Caco-2 (cell line): ENCODE measurements at regions of chr12 and their contacts with region 1.

Region 1: DNA sequence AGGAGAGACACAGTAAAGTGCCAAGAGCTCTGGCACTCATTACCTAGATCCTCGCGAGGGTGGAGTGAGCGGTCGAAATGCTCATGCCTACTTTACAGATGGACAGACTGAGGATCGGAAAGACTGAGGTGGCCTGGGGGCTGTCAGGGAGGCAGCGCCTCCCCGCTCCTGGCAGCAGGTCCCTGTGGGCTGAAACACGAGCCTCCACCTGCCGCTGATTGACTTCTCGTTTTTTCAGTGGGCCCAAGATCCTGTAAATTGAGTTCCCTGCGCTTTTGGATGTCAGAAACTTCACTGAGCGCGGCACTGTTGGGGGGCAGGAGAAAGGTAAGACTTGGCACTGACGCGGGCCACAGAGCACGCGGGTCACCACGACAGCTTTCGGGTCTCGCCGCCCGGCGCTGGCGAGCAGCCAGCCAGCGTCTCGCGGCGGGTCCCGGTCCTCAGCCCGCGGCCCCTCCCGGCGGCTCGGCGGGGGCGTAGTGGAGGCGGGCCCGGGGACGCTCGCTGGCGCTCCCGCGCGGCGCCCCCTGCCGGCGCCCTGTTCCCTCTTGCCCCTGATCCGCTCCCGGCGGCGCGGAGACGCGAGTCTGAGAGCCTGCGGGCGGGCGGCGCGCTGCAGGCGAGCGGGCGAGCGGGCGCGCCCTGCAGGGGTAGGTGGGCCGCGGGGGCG is 550 bp upstream of the SCN8A start:
- DNase-seq: peak; percentile 87 to 97
- H3K4me3 ChIP-seq: peak overlapping the region; percentile 92
- H3K4me3 Mint-ChIP-seq: peak overlapping the region; percentile 90
- H3K27ac Mint-ChIP-seq: peak overlapping the region; percentile 60
- H3K4me1 ChIP-seq: 0 out of 2 replicates have a peak, but pooled peaks cover 7% of the 10 kb centered on the region
- H3K4me1 Mint-ChIP-seq: peaks cover 10% of the 10 kb centered on the region
- H3K27me3 ChIP-seq: no peaks in the 10 kb centered on the region
- H3K27me3 Mint-ChIP-seq: no peaks in the 10 kb centered on the region
- CTCF ChIP-seq: peak; percentile 61 to 63

Region 2: DNA sequence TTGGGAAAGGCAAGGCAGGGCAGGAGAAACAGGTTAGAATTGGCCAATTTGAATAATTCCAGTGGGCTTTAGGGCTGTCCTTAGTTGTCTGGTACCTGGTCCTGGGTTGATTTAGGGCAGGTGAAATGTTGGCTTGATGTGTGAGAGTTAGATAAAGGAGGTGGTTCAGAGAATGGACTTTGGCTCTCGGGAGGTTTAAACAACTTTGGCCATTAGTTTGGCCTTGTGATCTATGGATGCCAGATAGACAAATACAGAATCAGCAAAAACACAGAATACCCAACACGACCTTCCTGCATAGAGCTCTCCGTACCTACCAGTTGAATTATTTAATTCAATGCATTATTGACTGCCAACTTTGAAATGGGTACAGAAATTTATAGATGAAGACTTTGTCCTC is 35.6 kb after region 1 on chr12:
- CTCF ChIA-PET with region 1: interaction called, 4 read pairs
- POLR2A ChIA-PET with region 1: no interaction called
- intact Hi-C with region 1: loop called (anchors 2 kb)
- DNase-seq: peak in 1 of 2 experiments; percentile 6
- H3K4me3 ChIP-seq: no peak overlapping the region
- H3K4me3 Mint-ChIP-seq: no peak overlapping the region
- H3K27ac Mint-ChIP-seq: no peak overlapping the region
- H3K4me1 ChIP-seq: peaks cover 7% of the 10 kb centered on the region
- H3K4me1 Mint-ChIP-seq: peaks cover 26% of the 10 kb centered on the region
- H3K27me3 ChIP-seq: no peaks in the 10 kb centered on the region
- H3K27me3 Mint-ChIP-seq: no peaks in the 10 kb centered on the region
- CTCF ChIP-seq: no peak

Region 3: GRCh38 chr12:51678086-51678724 is 87.7 kb after region 1 on chr12:
- CTCF ChIA-PET with region 1: no interaction called
- POLR2A ChIA-PET with region 1: no interaction called
- intact Hi-C with region 1: loop called (anchors 1 kb)
- DNase-seq: peak; percentile 64 to 77
- H3K4me3 ChIP-seq: no peak overlapping the region
- H3K4me3 Mint-ChIP-seq: no peak overlapping the region
- H3K27ac Mint-ChIP-seq: no peak overlapping the region
- H3K4me1 ChIP-seq: 0 out of 2 replicates have a peak, but pooled peaks cover 4% of the 10 kb centered on the region
- H3K4me1 Mint-ChIP-seq: peaks cover 14% of the 10 kb centered on the region
- H3K27me3 ChIP-seq: no peaks in the 10 kb centered on the region
- H3K27me3 Mint-ChIP-seq: no peaks in the 10 kb centered on the region
- CTCF ChIP-seq: peak; percentile 86 to 94

Region 4: DNA sequence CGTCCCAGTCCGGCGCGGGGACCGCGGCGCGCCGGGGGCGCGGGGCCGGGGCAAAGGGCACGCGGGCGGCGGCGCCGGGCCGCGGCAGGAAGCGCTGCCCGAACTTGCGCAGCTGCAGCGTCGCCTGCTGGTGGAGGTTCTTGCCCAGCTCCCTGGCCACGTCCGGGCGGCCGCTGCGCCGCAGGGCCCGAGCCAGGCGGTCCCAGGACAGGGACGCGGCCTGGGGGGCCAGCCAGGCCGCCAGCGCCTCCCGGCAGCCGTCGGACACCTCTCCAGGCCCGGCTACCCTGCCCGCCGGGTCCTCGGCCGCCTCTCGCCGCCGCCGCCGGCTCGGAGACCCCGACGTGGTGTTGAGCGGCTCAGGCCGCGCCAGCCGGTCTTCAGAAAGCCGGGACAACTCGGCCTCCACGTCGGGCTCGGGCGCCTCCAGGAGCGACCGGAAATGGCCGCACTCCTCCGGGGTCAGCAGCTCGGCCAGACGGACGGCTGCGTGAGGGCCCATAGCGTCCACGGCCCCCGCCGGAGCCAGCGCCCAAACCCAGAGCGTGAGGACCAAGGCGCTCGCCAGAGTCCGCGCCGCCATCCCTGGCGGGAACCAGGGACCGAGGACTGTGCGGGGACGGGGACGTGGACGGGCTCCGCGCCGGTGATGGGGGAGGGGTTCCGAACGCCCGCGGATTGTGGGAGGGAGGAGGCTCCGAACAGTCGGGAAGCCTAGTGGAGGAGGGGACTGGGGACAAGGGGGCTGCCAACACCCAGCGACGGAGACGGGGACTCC is 224.0 kb after region 1 on chr12:
- CTCF ChIA-PET with region 1: no interaction called
- POLR2A ChIA-PET with region 1: no interaction called
- intact Hi-C with region 1: loop called (anchors 1 kb)
- DNase-seq: peak; percentile 83 to 93
- H3K4me3 ChIP-seq: peak overlapping the region; percentile 66
- H3K4me3 Mint-ChIP-seq: peak overlapping the region; percentile 67
- H3K27ac Mint-ChIP-seq: peak overlapping the region; percentile 9
- H3K4me1 ChIP-seq: peaks cover 11% of the 10 kb centered on the region
- H3K4me1 Mint-ChIP-seq: peaks cover 18% of the 10 kb centered on the region
- H3K27me3 ChIP-seq: no peaks in the 10 kb centered on the region
- H3K27me3 Mint-ChIP-seq: no peaks in the 10 kb centered on the region
- CTCF ChIP-seq: peak; percentile 62 to 85